MCF 10A (cell line): ENCODE measurements at regions of chr18 and their contacts with region 1.

Region 1: GRCh38 chr18:54776282-54776977 is 51.8 kb upstream of the RAB27B start:
- DNase-seq: peak; percentile 98
- H3K4me3 Mint-ChIP-seq: peak overlapping the region; percentile 16
- H3K27ac Mint-ChIP-seq: peak overlapping the region; percentile 92
- H3K4me1 Mint-ChIP-seq: peaks cover 50% of the 10 kb centered on the region
- H3K27me3 Mint-ChIP-seq: no peaks in the 10 kb centered on the region
- CTCF ChIP-seq: no peak

Region 2: GRCh38 chr18:54679318-54680149 is 96.9 kb before region 1 on chr18:
- CTCF ChIA-PET with region 1: interaction called, 4 read pairs
- POLR2A ChIA-PET with region 1: interaction called, 6 read pairs
- intact Hi-C with region 1: loop called (anchors 1 kb)
- DNase-seq: peak; percentile 82
- H3K4me3 Mint-ChIP-seq: no peak overlapping the region
- H3K27ac Mint-ChIP-seq: no peak overlapping the region
- H3K4me1 Mint-ChIP-seq: peaks cover 7% of the 10 kb centered on the region
- H3K27me3 Mint-ChIP-seq: no peaks in the 10 kb centered on the region
- CTCF ChIP-seq: peak; percentile 66

Region 3: GRCh38 chr18:54742659-54743604 is 33.5 kb before region 1 on chr18:
- CTCF ChIA-PET with region 1: interaction called, 5 read pairs
- POLR2A ChIA-PET with region 1: interaction called, 17 read pairs
- intact Hi-C with region 1: loop called (anchors 2 kb)
- DNase-seq: peak; percentile 99
- H3K4me3 Mint-ChIP-seq: no peak overlapping the region
- H3K27ac Mint-ChIP-seq: peak overlapping the region; percentile 69
- H3K4me1 Mint-ChIP-seq: peaks cover 45% of the 10 kb centered on the region
- H3K27me3 Mint-ChIP-seq: no peaks in the 10 kb centered on the region
- CTCF ChIP-seq: no peak

Region 4: DNA sequence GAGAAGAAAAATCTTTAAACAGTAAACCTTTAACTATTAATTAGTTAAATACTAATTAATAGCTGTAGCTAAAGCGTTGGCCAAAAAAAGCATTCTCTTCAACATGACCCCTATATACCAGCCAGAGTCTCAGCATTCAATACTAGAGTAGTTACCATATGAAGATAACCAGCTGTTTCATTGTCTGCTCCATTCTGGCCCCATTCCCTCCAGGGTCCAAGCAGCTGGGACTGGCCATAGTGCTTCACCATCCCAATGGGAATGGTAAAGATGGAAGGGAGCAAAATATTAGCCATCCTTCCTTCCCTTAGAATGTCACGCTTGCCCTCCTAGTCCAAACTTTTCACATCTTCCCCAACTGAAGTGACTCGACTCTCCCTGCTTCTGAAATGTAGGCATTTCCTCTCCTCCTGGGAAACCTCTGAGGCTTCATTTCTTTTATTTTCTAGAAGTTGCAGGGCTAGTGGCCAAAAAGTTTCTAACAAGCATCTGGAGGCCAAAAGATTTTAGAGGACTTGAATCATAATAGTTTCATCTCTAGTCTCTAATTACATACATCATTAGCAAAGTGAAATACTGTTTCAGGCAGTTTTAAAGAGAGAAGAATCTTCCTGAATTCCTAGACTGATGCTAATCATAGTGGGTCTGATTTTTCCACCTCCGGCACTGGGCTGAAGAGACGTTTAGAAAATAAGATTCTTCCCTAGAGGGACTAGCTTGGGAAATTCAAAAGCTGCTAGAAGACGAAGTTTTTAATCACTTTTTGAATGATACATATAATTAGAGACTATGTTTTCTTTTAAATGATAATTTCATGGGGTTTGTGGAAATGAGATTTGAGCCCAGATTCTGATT is 130.1 kb after region 1 on chr18:
- CTCF ChIA-PET with region 1: no interaction called
- POLR2A ChIA-PET with region 1: interaction called, 3 read pairs
- intact Hi-C with region 1: loop called (anchors 10 kb)
- DNase-seq: no peak
- H3K4me3 Mint-ChIP-seq: no peak overlapping the region
- H3K27ac Mint-ChIP-seq: no peak overlapping the region
- H3K4me1 Mint-ChIP-seq: no peaks in the 10 kb centered on the region
- H3K27me3 Mint-ChIP-seq: no peaks in the 10 kb centered on the region
- CTCF ChIP-seq: no peak

Region 5: DNA sequence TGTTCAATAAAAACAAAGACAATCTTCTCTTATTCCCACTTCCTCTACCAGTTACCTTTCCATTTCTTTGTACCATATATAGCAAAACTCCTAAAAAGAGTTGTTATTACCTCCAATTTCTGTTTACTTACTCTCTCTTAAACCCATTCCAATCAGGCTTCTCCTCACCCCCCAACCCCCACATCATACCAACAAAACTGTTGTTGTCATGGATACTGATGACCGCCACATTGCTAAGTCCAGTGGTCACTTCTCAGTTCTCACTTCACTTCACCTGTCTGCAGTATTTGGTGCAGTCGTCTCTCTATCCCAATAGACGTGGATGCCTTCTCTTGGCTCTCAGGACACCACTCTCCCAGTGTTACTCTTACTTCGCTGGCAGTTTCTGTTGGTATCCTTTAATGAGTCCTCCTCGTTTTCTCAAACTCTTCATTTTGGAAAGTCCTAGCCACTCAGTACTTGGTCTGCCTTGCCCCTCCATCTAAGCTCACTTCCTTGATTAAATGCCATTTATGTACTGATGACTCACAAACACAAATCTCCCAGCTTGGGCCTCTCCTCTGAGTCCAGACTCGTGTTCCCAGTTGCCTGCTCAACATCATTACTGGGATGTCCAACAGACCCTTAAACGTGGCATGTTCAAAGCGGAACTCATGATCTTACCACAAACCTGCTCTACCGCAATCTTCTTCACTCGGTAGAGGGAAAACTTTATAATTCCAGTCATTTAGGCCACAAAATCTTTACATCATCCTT is 196.4 kb after region 1 on chr18:
- CTCF ChIA-PET with region 1: interaction called, 3 read pairs
- POLR2A ChIA-PET with region 1: interaction called, 3 read pairs
- intact Hi-C with region 1: loop called (anchors 1 kb)
- DNase-seq: no peak
- H3K4me3 Mint-ChIP-seq: no peak overlapping the region
- H3K27ac Mint-ChIP-seq: no peak overlapping the region
- H3K4me1 Mint-ChIP-seq: no peaks in the 10 kb centered on the region
- H3K27me3 Mint-ChIP-seq: no peaks in the 10 kb centered on the region
- CTCF ChIP-seq: no peak

Region 6: DNA sequence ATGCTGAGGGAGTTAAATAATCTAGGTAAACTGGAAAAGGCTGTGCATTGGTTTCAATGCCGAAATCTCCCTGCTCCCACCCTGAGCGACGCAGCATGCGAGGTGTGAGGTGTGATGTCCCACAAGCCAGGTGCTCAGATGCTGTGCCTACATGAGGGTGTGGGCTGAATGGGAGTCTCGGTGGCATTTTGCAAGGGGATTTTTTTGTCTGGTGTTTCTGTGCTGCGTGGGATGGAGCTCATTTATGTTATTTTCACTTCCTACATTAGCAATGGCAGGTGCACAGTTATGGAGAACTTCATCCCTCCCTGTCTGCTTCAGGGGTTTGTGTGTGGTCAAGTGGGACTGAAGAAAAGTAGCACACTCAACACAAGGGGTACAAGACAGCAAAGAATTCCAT is 293.1 kb after region 1 on chr18:
- CTCF ChIA-PET with region 1: no interaction called
- POLR2A ChIA-PET with region 1: no interaction called
- intact Hi-C with region 1: no loop called
- DNase-seq: no peak
- H3K4me3 Mint-ChIP-seq: no peak overlapping the region
- H3K27ac Mint-ChIP-seq: no peak overlapping the region
- H3K4me1 Mint-ChIP-seq: no peaks in the 10 kb centered on the region
- H3K27me3 Mint-ChIP-seq: no peaks in the 10 kb centered on the region
- CTCF ChIP-seq: no peak